Endothelial cell of umbilical vein (primary cell): ENCODE measurements at regions of chr10 and their contacts with region 1.

Region 1: GRCh38 chr10:30591249-30591670 is 38.3 kb downstream of the LYZL2 start:
- DNase-seq: peak; percentile 65
- H3K4me3 ChIP-seq: no peak overlapping the region
- H3K27ac ChIP-seq: no peak overlapping the region
- H3K4me1 ChIP-seq: no peaks in the 10 kb centered on the region
- H3K27me3 ChIP-seq: peaks cover 2 to 16% of the 10 kb centered on the region in 2 experiments
- CTCF ChIP-seq: peak; percentile 65 to 74
- POLR2A ChIP-seq: no peak

Region 2: GRCh38 chr10:30378201-30379006 is 212.9 kb before region 1 on chr10:
- CTCF ChIA-PET with region 1: interaction called, 21 read pairs
- POLR2A ChIA-PET with region 1: no interaction called
- dilution Hi-C with region 1: no loop called
- intact Hi-C with region 1: no loop called
- DNase-seq: no peak
- H3K4me3 ChIP-seq: no peak overlapping the region
- H3K27ac ChIP-seq: no peak overlapping the region
- H3K4me1 ChIP-seq: no peaks in the 10 kb centered on the region
- H3K27me3 ChIP-seq: peaks cover 5 to 14% of the 10 kb centered on the region in 2 experiments
- CTCF ChIP-seq: no peak
- POLR2A ChIP-seq: no peak

Region 3: GRCh38 chr10:30404540-30404939 is 186.7 kb before region 1 on chr10:
- CTCF ChIA-PET with region 1: interaction called, 23 read pairs
- POLR2A ChIA-PET with region 1: no interaction called
- dilution Hi-C with region 1: no loop called
- intact Hi-C with region 1: no loop called
- DNase-seq: no peak
- H3K4me3 ChIP-seq: no peak overlapping the region
- H3K27ac ChIP-seq: no peak overlapping the region
- H3K4me1 ChIP-seq: no peaks in the 10 kb centered on the region
- H3K27me3 ChIP-seq: peaks cover under 1 to 4% of the 10 kb centered on the region in 2 experiments
- CTCF ChIP-seq: no peak
- POLR2A ChIP-seq: no peak

Region 4: DNA sequence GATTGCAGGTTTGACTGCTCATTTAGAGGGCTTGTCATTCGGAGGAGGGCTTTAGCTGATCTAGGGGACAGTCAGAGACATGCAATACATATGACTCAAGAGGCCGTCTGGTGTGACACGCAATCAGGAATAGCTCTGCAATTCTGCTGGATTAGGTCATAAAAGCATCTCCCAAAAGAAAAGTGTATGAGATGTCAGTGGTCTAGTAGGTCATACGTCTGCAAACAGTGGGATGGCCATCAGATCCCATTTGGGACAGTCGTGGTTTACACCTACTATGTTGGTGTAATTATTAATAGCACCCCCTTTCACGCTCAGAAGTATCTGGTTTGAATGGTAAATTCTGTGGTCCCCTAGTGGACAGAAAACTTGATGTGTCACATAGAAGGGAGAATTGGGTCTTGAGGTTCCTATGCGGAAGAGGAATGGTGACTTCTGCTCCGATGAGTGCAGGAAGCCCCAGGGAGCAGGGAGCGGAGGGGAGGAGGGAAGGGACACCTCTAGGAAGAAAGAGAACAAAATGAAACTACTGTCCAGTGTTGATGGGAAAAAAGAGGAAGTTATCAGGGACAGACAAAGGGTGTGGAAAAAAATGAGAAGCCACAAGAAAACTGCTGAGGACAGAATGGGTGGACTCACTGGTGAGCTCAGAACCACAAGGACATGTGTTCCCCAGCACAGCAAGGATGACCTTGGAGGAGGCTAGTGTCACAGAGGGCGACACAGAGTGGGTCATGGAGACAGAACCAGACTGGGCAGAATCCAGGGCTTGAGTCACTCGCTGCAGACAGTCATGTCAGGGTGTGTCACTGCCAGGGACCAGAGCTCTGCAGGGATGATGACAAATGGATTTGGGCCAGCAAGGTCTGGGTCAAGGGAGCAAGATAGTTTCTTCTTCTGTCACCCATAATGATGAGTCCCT is 97.4 kb before region 1 on chr10:
- CTCF ChIA-PET with region 1: interaction called, 10 read pairs
- POLR2A ChIA-PET with region 1: no interaction called
- dilution Hi-C with region 1: no loop called
- intact Hi-C with region 1: no loop called
- DNase-seq: no peak
- H3K4me3 ChIP-seq: no peak overlapping the region
- H3K27ac ChIP-seq: no peak overlapping the region
- H3K4me1 ChIP-seq: no peaks in the 10 kb centered on the region
- H3K27me3 ChIP-seq: peaks cover 15 to 25% of the 10 kb centered on the region in 2 experiments
- CTCF ChIP-seq: no peak
- POLR2A ChIP-seq: no peak

Region 5: GRCh38 chr10:30553625-30554439 is 37.4 kb before region 1 on chr10:
- CTCF ChIA-PET with region 1: interaction called, 10 read pairs
- POLR2A ChIA-PET with region 1: no interaction called
- dilution Hi-C with region 1: no loop called
- intact Hi-C with region 1: no loop called
- DNase-seq: peak; percentile 59
- H3K4me3 ChIP-seq: peak overlapping the region in 2 of 3 experiments; percentile 11 to 41
- H3K27ac ChIP-seq: no peak overlapping the region
- H3K4me1 ChIP-seq: peaks cover 7% of the 10 kb centered on the region
- H3K27me3 ChIP-seq: no peaks in the 10 kb centered on the region
- CTCF ChIP-seq: no peak
- POLR2A ChIP-seq: no peak

Region 6: DNA sequence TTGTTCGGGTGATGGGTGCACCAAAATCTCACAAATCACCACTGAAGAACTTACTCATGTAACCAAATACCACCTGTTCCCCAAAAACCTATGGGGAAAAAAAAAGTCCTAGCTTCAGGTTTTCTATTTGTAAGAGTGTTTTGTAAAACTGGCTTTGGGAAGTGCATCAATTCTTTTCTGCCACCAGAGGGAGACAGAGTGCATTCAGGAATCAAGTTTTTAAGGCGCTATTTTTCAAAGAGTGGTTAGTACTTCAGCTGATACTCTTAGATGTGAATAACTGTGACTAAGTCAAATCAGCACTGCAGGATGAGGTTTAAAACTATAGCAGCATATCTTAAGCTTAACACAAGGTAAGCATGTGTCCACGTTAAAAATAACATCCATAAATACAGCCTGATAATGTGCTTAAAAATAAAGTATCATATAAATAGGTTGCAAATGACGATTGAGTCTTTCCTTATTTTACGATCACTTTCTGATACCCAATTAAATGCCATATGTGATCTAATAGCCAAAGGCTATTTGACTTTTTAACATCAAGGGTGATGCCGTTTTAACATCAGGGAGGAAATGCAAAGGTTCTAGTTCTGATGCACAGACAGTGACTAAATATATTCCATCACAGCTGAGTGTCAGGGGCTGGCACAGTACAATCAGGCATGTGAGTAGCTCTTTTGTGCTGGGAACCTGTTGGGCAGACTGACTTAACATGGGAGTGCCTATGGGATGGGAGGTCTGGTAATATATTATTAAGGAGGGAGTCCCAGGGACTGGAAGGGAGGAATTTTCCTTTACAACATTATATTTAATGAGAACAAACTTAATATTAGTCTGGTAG is 48.9 kb after region 1 on chr10:
- CTCF ChIA-PET with region 1: interaction called, 28 read pairs
- POLR2A ChIA-PET with region 1: no interaction called
- dilution Hi-C with region 1: no loop called
- intact Hi-C with region 1: no loop called
- DNase-seq: peak; percentile 86
- H3K4me3 ChIP-seq: no peak overlapping the region
- H3K27ac ChIP-seq: peak overlapping the region; percentile 44
- H3K4me1 ChIP-seq: peaks cover 61% of the 10 kb centered on the region
- H3K27me3 ChIP-seq: peaks cover 0 to 1% of the 10 kb centered on the region in 2 experiments
- CTCF ChIP-seq: peak; percentile 64 to 70
- POLR2A ChIP-seq: no peak

Region 7: GRCh38 chr10:30662814-30663213 is 71.6 kb after region 1 on chr10:
- CTCF ChIA-PET with region 1: no interaction called
- POLR2A ChIA-PET with region 1: no interaction called
- dilution Hi-C with region 1: no loop called
- intact Hi-C with region 1: no loop called
- DNase-seq: no peak
- H3K4me3 ChIP-seq: no peak overlapping the region
- H3K27ac ChIP-seq: no peak overlapping the region
- H3K4me1 ChIP-seq: no peaks in the 10 kb centered on the region
- H3K27me3 ChIP-seq: peaks cover under 1 to 1% of the 10 kb centered on the region in 2 experiments
- CTCF ChIP-seq: no peak
- POLR2A ChIP-seq: no peak